ENCODE measurements at regions of chrX and their contacts with region 1.

Region 1: DNA sequence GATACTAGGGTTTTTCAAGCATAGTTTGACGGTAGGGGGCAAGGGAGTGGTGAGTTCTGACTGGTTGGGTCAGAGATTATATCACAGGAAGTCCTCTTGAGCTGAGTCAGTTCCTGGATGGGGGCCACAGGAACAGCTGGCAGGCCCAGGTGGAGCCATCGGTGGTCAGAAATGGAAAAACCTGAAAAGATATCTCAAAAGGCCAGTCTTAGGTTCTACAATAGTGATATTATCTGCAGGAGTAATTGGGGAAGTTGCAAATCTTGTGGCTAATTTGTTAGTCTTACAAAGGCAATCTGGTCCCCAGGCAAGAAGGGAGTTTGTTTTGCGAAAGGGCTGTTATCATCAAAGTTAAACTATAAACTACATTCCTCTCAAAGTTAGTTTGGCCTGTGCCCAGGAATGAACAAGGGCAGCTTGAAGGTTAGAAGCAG is 159.3 kb downstream of the PTCHD1 start:
- DNase-seq: peak; percentile 80
- H3K4me3 Mint-ChIP-seq: peak overlapping the region; percentile 10
- H3K27ac Mint-ChIP-seq: peak overlapping the region; percentile 37
- H3K4me1 Mint-ChIP-seq: peaks cover 23% of the 10 kb centered on the region
- H3K27me3 Mint-ChIP-seq: no peaks in the 10 kb centered on the region
- CTCF ChIP-seq: no peak

Region 2: DNA sequence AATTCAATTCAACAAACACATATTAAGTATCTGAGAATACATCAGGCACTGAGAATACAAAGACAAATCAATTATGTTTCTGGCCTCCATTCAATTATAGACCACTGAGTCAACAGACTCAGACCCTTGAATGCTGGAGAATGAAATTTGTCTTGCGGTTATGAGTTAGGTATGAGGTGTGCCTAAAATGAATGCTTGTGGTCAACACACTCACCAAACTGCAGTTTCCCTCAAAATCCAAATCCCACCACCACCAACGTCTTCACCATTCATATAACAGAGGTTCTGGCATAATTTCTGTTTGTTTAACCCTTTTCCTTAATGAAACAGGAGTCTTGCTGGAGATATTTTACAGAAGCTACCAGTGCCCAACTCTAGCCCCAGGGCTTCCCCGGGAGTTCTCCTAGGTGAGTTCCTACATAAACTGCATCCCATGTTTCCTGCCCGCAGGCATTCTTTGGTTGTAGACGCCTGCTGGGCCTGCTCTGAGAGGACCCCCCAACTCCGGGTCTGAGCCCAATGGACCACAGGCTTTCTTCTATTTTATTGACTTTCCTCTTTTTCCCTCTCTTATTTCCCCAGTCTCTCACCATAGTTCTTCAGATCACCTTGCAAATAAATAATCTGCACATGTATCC is 374.9 kb before region 1 on chrX:
- CTCF ChIA-PET with region 1: no interaction called
- intact Hi-C with region 1: loop called (anchors 10 kb)
- DNase-seq: peak; percentile 9
- H3K4me3 Mint-ChIP-seq: peak overlapping the region; percentile 38
- H3K27ac Mint-ChIP-seq: no peak overlapping the region
- H3K4me1 Mint-ChIP-seq: peaks cover 21% of the 10 kb centered on the region
- H3K27me3 Mint-ChIP-seq: no peaks in the 10 kb centered on the region
- CTCF ChIP-seq: no peak

Region 3: GRCh38 chrX:23503835-23504542 is 10.0 kb after region 1 on chrX:
- CTCF ChIA-PET with region 1: interaction called, 24 read pairs
- intact Hi-C with region 1: loop called (anchors 1 kb)
- DNase-seq: peak; percentile 89
- H3K4me3 Mint-ChIP-seq: no peak overlapping the region
- H3K27ac Mint-ChIP-seq: peak overlapping the region; percentile 71
- H3K4me1 Mint-ChIP-seq: peaks cover 50% of the 10 kb centered on the region
- H3K27me3 Mint-ChIP-seq: no peaks in the 10 kb centered on the region
- CTCF ChIP-seq: no peak

Region 4: GRCh38 chrX:23554304-23554703 is 60.3 kb after region 1 on chrX:
- CTCF ChIA-PET with region 1: no interaction called
- intact Hi-C with region 1: loop called (anchors 2 kb)
- DNase-seq: peak; percentile 5
- H3K4me3 Mint-ChIP-seq: no peak overlapping the region
- H3K27ac Mint-ChIP-seq: no peak overlapping the region
- H3K4me1 Mint-ChIP-seq: no peaks in the 10 kb centered on the region
- H3K27me3 Mint-ChIP-seq: no peaks in the 10 kb centered on the region
- CTCF ChIP-seq: peak; percentile 22

Region 5: DNA sequence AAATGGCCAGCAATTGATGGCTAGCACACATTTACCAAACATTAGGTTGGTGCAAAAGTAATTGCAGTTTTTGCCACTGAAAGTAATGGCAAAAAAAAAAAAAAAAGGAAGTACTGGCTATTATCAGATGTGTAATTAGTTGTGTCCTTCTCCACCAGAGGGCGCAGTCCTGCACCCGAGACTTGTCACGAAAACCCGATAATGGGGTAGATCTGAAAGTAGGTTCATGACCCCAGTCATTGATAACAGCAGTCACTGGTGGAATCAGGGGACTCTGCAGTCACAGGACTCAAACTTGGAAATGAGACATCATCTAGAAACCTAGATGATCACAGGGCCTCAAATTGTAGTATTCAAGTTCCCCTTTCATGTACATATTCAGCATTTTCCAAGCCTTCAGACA is 262.2 kb after region 1 on chrX:
- CTCF ChIA-PET with region 1: no interaction called
- intact Hi-C with region 1: no loop called
- DNase-seq: peak; percentile 66
- H3K4me3 Mint-ChIP-seq: no peak overlapping the region
- H3K27ac Mint-ChIP-seq: no peak overlapping the region
- H3K4me1 Mint-ChIP-seq: no peaks in the 10 kb centered on the region
- H3K27me3 Mint-ChIP-seq: no peaks in the 10 kb centered on the region
- CTCF ChIP-seq: peak; percentile 41